ENCODE measurements at regions of chr2 and their contacts with region 1.

Region 1: GRCh38 chr2:15636972-15637785 is 45.5 kb downstream of the DDX1 start:
- DNase-seq: peak; percentile 77
- ATAC-seq: peak; percentile 89
- H3K4me3 Mint-ChIP-seq: no peak overlapping the region
- H3K27ac Mint-ChIP-seq: no peak overlapping the region
- H3K4me1 Mint-ChIP-seq: peaks cover 6% of the 10 kb centered on the region
- H3K27me3 Mint-ChIP-seq: no peaks in the 10 kb centered on the region

Region 2: DNA sequence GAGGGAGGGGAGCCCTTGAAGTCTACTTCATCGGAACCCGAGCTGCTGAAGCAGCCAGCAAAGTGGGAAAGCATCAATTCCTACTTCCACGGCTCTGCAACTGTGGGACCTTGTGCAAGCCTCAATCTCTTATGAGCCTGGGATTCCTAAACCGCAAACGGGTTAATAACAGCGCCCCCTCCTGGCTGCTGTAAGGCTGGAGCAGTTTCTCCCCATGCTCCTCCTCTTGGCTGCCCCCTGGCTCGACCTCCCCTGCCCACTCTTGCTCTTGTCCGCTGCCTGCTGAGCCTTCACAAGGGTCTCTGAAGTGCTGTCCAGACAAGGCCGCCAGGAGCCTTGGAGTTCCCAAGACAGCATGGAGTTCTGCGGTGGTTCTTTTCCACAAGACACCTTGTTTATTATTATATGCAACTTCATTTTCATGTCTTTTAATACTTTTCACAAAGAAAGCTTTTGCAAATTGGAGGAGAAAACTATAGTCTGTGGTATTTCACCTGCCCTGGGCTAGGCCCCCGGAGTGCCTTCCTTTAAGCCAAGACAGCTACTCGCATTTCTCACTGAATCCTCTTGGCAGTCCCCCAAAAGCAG is 111.7 kb after region 1 on chr2:
- CTCF ChIA-PET with region 1: interaction called, 4 read pairs
- POLR2A ChIA-PET with region 1: no interaction called
- intact Hi-C with region 1: loop called (anchors 1 to 5 kb)
- DNase-seq: peak; percentile 52
- ATAC-seq: no peak
- H3K4me3 Mint-ChIP-seq: no peak overlapping the region
- H3K27ac Mint-ChIP-seq: no peak overlapping the region
- H3K4me1 Mint-ChIP-seq: no peaks in the 10 kb centered on the region
- H3K27me3 Mint-ChIP-seq: peaks cover 5% of the 10 kb centered on the region

Region 3: GRCh38 chr2:16281451-16282336 is 644.5 kb after region 1 on chr2:
- CTCF ChIA-PET with region 1: no interaction called
- POLR2A ChIA-PET with region 1: no interaction called
- intact Hi-C with region 1: loop called in 1 of 2 experiments (anchors 1 kb)
- DNase-seq: peak; percentile 16
- ATAC-seq: peak; percentile 61
- H3K4me3 Mint-ChIP-seq: no peak overlapping the region
- H3K27ac Mint-ChIP-seq: no peak overlapping the region
- H3K4me1 Mint-ChIP-seq: no peaks in the 10 kb centered on the region
- H3K27me3 Mint-ChIP-seq: no peaks in the 10 kb centered on the region

Region 4: GRCh38 chr2:16507655-16508489 is 870.7 kb after region 1 on chr2:
- CTCF ChIA-PET with region 1: no interaction called
- POLR2A ChIA-PET with region 1: no interaction called
- intact Hi-C with region 1: loop called in 1 of 2 experiments (anchors 1 kb)
- DNase-seq: peak; percentile 46
- ATAC-seq: peak; percentile 30
- H3K4me3 Mint-ChIP-seq: no peak overlapping the region
- H3K27ac Mint-ChIP-seq: no peak overlapping the region
- H3K4me1 Mint-ChIP-seq: no peaks in the 10 kb centered on the region
- H3K27me3 Mint-ChIP-seq: peaks cover 26% of the 10 kb centered on the region

Measured in activated CD4-positive, alpha-beta T cell treated with anti-CD3 and anti-CD28 coated beads for 36 hours (primary cell).